ENCODE measurements at regions of chr10 and their contacts with region 1.

Region 1: GRCh38 chr10:102072673-102073527 is 7.8 kb downstream of the HPS6 start:
- DNase-seq: peak; percentile 63 to 86 (median 82)
- ATAC-seq: peak; percentile 97
- H3K4me3 ChIP-seq: no peak overlapping the region
- H3K4me3 Mint-ChIP-seq: no peak overlapping the region
- H3K27ac ChIP-seq: no peak overlapping the region
- H3K27ac Mint-ChIP-seq: no peak overlapping the region
- H3K4me1 ChIP-seq: no peaks in the 10 kb centered on the region
- H3K4me1 Mint-ChIP-seq: peaks cover 5% of the 10 kb centered on the region
- H3K27me3 ChIP-seq: no peaks in the 10 kb centered on the region
- H3K27me3 Mint-ChIP-seq: no peaks in the 10 kb centered on the region
- CTCF ChIP-seq: peak; percentile 82

Region 2: GRCh38 chr10:101602761-101603398 is 470.0 kb before region 1 on chr10:
- CTCF ChIA-PET with region 1: no interaction called
- POLR2A ChIA-PET with region 1: no interaction called
- intact Hi-C with region 1: loop called in 1 of 2 experiments (anchors 5 kb)
- DNase-seq: peak in 8 of 9 experiments; percentile 26 to 68 (median 48)
- ATAC-seq: peak; percentile 81
- H3K4me3 ChIP-seq: no peak overlapping the region
- H3K4me3 Mint-ChIP-seq: no peak overlapping the region
- H3K27ac ChIP-seq: no peak overlapping the region
- H3K27ac Mint-ChIP-seq: no peak overlapping the region
- H3K4me1 ChIP-seq: no peaks in the 10 kb centered on the region
- H3K4me1 Mint-ChIP-seq: no peaks in the 10 kb centered on the region
- H3K27me3 ChIP-seq: no peaks in the 10 kb centered on the region
- H3K27me3 Mint-ChIP-seq: no peaks in the 10 kb centered on the region
- CTCF ChIP-seq: peak; percentile 75

Region 3: DNA sequence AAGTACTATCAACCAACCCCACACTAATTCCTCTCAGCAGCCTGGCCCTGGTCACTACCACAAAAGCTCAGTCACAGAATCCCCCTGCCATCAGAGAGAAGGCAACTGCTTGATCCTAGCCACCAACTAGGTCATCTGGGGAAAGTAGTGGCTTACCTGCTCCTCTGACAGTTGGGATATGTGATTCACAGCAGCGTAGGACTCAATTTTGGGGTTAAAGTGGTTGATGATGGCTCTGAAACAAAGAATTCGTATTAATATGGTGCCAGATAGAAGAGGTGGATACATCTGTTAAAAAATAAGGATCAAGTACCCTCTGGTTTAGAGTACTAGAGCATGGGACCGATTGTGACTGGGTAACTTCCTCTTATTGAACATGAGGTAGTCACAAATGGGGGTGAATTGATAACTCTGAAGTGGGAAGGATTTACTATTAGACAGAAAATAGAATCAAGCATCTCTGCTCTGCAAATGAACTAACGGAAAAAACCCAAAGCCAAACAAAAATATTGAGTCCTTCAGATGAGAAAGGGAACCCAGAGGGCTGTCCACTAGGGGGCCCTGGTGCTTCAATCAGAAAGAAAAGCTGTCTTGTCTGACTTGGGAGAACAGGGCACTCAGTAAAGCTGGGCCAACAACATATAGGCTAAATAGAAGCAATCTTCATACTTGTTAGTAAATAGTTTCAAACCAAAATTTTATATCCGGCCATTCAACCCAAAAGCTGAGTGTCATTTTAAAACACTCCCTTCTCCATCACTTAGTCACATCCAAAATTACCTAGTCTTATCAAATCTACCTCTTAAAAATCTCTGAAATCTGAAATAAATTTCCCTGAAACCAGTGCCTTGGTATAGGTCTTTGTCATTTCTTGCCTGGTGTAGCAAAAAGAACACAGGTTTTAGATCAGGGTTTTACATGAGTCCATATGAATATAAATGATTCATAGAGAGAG is 183.4 kb before region 1 on chr10:
- CTCF ChIA-PET with region 1: interaction called, 13 read pairs
- POLR2A ChIA-PET with region 1: interaction called, 3 read pairs
- intact Hi-C with region 1: loop called (anchors 1 kb)
- DNase-seq: peak; percentile 27 to 73 (median 63)
- ATAC-seq: peak; percentile 76
- H3K4me3 ChIP-seq: no peak overlapping the region
- H3K4me3 Mint-ChIP-seq: no peak overlapping the region
- H3K27ac ChIP-seq: no peak overlapping the region
- H3K27ac Mint-ChIP-seq: no peak overlapping the region
- H3K4me1 ChIP-seq: no peaks in the 10 kb centered on the region
- H3K4me1 Mint-ChIP-seq: no peaks in the 10 kb centered on the region
- H3K27me3 ChIP-seq: no peaks in the 10 kb centered on the region
- H3K27me3 Mint-ChIP-seq: no peaks in the 10 kb centered on the region
- CTCF ChIP-seq: peak; percentile 88

Region 4: DNA sequence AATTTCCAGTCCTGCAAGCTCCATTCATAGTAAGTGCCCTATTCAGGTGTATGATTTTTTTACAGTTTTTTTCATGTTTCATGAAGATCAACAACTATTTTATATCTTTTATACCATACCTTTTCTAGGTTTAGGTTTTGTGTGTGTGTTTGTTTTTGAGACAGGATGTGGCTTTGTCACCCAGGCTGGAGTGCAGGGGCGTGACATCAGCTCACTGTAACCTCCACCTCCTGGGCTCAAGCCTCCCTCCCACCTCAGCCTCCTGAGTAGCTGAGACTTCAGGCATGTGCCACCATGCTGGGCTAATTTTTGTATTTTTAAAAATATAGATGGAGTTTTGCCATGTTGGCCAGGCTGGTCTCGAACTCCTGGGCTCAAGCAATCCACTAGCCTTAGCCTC is 52.0 kb before region 1 on chr10:
- CTCF ChIA-PET with region 1: interaction called, 17 read pairs
- POLR2A ChIA-PET with region 1: no interaction called
- intact Hi-C with region 1: no loop called
- DNase-seq: peak in 2 of 9 experiments; percentile 5 to 23
- ATAC-seq: no peak
- H3K4me3 ChIP-seq: no peak overlapping the region
- H3K4me3 Mint-ChIP-seq: no peak overlapping the region
- H3K27ac ChIP-seq: no peak overlapping the region
- H3K27ac Mint-ChIP-seq: no peak overlapping the region
- H3K4me1 ChIP-seq: no peaks in the 10 kb centered on the region
- H3K4me1 Mint-ChIP-seq: peaks cover 4% of the 10 kb centered on the region
- H3K27me3 ChIP-seq: no peaks in the 10 kb centered on the region
- H3K27me3 Mint-ChIP-seq: no peaks in the 10 kb centered on the region
- CTCF ChIP-seq: no peak

Region 5: GRCh38 chr10:102085336-102085735 is 12.4 kb after region 1 on chr10:
- CTCF ChIA-PET with region 1: interaction called, 21 read pairs
- POLR2A ChIA-PET with region 1: no interaction called
- intact Hi-C with region 1: no loop called
- DNase-seq: no peak
- ATAC-seq: no peak
- H3K4me3 ChIP-seq: no peak overlapping the region
- H3K4me3 Mint-ChIP-seq: no peak overlapping the region
- H3K27ac ChIP-seq: no peak overlapping the region
- H3K27ac Mint-ChIP-seq: no peak overlapping the region
- H3K4me1 ChIP-seq: no peaks in the 10 kb centered on the region
- H3K4me1 Mint-ChIP-seq: no peaks in the 10 kb centered on the region
- H3K27me3 ChIP-seq: no peaks in the 10 kb centered on the region
- H3K27me3 Mint-ChIP-seq: no peaks in the 10 kb centered on the region
- CTCF ChIP-seq: no peak

Region 6: DNA sequence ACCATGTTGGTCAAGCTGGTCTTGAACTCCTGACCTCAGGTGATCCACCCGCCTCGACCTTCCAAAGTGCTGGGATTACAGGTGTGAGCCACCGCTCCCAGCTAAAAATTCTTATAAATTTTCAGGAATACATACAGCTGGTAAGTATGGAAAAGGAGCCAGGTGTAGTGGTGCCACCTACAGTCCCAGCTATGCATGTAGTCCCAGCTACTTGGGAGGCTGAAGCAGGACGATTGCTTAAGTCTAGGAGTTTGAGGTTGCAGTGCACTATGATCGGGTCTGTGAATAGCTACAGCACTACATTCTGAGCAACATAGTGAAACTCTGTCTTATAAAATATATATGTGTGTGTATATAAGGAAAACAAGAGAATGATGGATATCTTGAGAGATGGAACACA is 28.3 kb after region 1 on chr10:
- CTCF ChIA-PET with region 1: interaction called, 10 read pairs
- POLR2A ChIA-PET with region 1: no interaction called
- intact Hi-C with region 1: no loop called
- DNase-seq: no peak
- ATAC-seq: no peak
- H3K4me3 ChIP-seq: no peak overlapping the region
- H3K4me3 Mint-ChIP-seq: no peak overlapping the region
- H3K27ac ChIP-seq: no peak overlapping the region
- H3K27ac Mint-ChIP-seq: no peak overlapping the region
- H3K4me1 ChIP-seq: peaks cover 15% of the 10 kb centered on the region
- H3K4me1 Mint-ChIP-seq: peaks cover 17% of the 10 kb centered on the region
- H3K27me3 ChIP-seq: no peaks in the 10 kb centered on the region
- H3K27me3 Mint-ChIP-seq: no peaks in the 10 kb centered on the region
- CTCF ChIP-seq: no peak

Region 7: GRCh38 chr10:102114861-102115618 is 42.1 kb after region 1 on chr10:
- CTCF ChIA-PET with region 1: interaction called, 25 read pairs
- POLR2A ChIA-PET with region 1: no interaction called
- intact Hi-C with region 1: loop called in 1 of 2 experiments (anchors 5 kb)
- DNase-seq: peak; percentile 62 to 90 (median 84)
- ATAC-seq: peak; percentile 69
- H3K4me3 ChIP-seq: peak overlapping the region; percentile 57 to 75
- H3K4me3 Mint-ChIP-seq: peak overlapping the region; percentile 91
- H3K27ac ChIP-seq: peak overlapping the region; percentile 56 to 97
- H3K27ac Mint-ChIP-seq: peak overlapping the region; percentile 93
- H3K4me1 ChIP-seq: peaks cover 63% of the 10 kb centered on the region
- H3K4me1 Mint-ChIP-seq: peaks cover 71% of the 10 kb centered on the region
- H3K27me3 ChIP-seq: no peaks in the 10 kb centered on the region
- H3K27me3 Mint-ChIP-seq: no peaks in the 10 kb centered on the region
- CTCF ChIP-seq: no peak

Region 8: DNA sequence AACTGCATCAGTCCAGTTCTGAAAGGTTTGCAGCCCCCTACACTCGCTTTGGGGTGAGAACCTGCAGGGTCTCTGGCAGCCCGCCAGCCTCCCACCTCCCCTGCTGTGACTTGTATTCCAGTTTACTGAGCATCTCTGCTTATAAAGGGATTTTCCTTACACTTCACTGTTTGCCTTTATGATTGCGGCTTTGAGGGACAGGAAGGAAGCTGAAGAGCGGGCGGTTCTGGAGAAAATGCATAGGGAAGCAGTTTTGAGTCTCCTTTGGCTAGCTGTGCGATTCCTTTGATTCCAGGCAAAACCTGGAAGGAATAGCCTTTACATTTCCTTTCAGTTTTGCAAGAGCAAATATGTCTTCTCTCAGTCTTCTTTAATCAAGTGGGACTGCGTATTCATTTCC is 506.4 kb after region 1 on chr10:
- CTCF ChIA-PET with region 1: no interaction called
- POLR2A ChIA-PET with region 1: no interaction called
- intact Hi-C with region 1: no loop called
- DNase-seq: no peak
- ATAC-seq: no peak
- H3K4me3 ChIP-seq: no peak overlapping the region
- H3K4me3 Mint-ChIP-seq: no peak overlapping the region
- H3K27ac ChIP-seq: no peak overlapping the region
- H3K27ac Mint-ChIP-seq: peak overlapping the region; percentile 6
- H3K4me1 ChIP-seq: no peaks in the 10 kb centered on the region
- H3K4me1 Mint-ChIP-seq: peaks cover 2% of the 10 kb centered on the region
- H3K27me3 ChIP-seq: no peaks in the 10 kb centered on the region
- H3K27me3 Mint-ChIP-seq: no peaks in the 10 kb centered on the region
- CTCF ChIP-seq: no peak

Region 9: DNA sequence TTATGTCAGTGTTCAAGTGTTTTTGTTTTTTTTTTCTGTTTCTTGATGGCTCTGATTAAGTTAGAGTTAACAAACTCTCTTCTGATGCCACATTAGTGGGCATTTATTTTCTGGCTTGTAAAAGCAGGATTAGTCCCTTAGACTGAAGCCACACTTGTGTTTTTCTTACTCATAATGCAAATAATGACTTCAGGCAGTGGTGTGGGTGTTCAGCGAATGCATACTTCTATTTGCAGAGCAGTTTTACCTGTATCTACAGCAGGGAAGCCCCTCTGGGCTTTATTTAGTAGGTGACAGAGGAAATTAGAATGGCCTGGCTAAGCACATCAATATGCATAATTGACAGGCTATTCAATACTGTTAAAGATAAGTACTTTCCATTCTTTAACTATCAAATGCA is 925.1 kb after region 1 on chr10:
- CTCF ChIA-PET with region 1: no interaction called
- POLR2A ChIA-PET with region 1: no interaction called
- intact Hi-C with region 1: no loop called
- DNase-seq: no peak
- ATAC-seq: no peak
- H3K4me3 ChIP-seq: no peak overlapping the region
- H3K4me3 Mint-ChIP-seq: no peak overlapping the region
- H3K27ac ChIP-seq: no peak overlapping the region
- H3K27ac Mint-ChIP-seq: no peak overlapping the region
- H3K4me1 ChIP-seq: peaks cover 9% of the 10 kb centered on the region
- H3K4me1 Mint-ChIP-seq: peaks cover 22% of the 10 kb centered on the region
- H3K27me3 ChIP-seq: no peaks in the 10 kb centered on the region
- H3K27me3 Mint-ChIP-seq: no peaks in the 10 kb centered on the region
- CTCF ChIP-seq: no peak